A549 (cell line): ENCODE measurements at regions of chr1 and their contacts with region 1.

Region 1: DNA sequence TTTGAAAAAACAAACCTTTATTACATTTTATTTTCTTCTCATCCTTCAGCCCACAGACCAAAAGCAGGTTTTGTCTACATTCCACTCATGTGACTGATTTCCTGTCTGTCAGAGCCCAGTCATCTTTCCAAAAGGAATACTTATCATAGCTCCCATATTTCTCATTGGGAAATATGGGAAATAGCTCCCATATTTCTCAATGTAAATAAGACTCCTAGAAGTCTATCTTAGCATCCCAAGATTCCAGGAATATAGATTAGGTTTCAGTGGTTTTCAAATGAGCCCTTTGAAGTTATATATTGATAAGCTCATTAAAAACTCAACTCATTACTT is 19.1 kb upstream of the NRDC start:
- DNase-seq: peak; percentile 42 to 52
- ATAC-seq: peak; percentile 76 to 86
- H3K4me3 ChIP-seq: no peak overlapping the region
- H3K27ac ChIP-seq: peak overlapping the region; percentile 78 to 93
- H3K4me1 ChIP-seq: peaks cover 28% of the 10 kb centered on the region
- CTCF ChIP-seq: no peak
- EP300 ChIP-seq: peak; percentile 57 to 70; a peak in 1 of 5 replicates
- POLR2A ChIP-seq: no peak
- RAD21 ChIP-seq: no peak

Region 2: GRCh38 chr1:51863384-51863783 is 34.3 kb before region 1 on chr1:
- CTCF ChIA-PET with region 1: no interaction called
- POLR2A ChIA-PET with region 1: no interaction called
- DNase-seq: no peak
- ATAC-seq: no peak
- H3K4me3 ChIP-seq: no peak overlapping the region
- H3K27ac ChIP-seq: no peak overlapping the region
- H3K4me1 ChIP-seq: no peaks in the 10 kb centered on the region
- CTCF ChIP-seq: no peak
- EP300 ChIP-seq: no peak
- POLR2A ChIP-seq: no peak
- RAD21 ChIP-seq: no peak

Region 3: GRCh38 chr1:51926171-51926812 is 28.6 kb after region 1 on chr1:
- CTCF ChIA-PET with region 1: interaction called, 15 read pairs
- POLR2A ChIA-PET with region 1: interaction called, 3 read pairs
- DNase-seq: peak in 1 of 2 experiments; percentile 42
- ATAC-seq: peak; percentile 54 to 77; a peak in 4 of 6 replicates
- H3K4me3 ChIP-seq: no peak overlapping the region
- H3K27ac ChIP-seq: peak overlapping the region in 1 of 2 experiments; percentile 36; a peak in 1 of 6 replicates
- H3K4me1 ChIP-seq: no peaks in the 10 kb centered on the region; the same call in 2 of the 3 replicates
- CTCF ChIP-seq: peak; percentile 30; the same call in 2 of the 3 replicates
- EP300 ChIP-seq: no peak
- POLR2A ChIP-seq: no peak
- RAD21 ChIP-seq: peak in 1 of 2 experiments; percentile 63; a peak in 3 of 5 replicates

Region 4: GRCh38 chr1:51960262-51960661 is 62.6 kb after region 1 on chr1:
- CTCF ChIA-PET with region 1: no interaction called
- POLR2A ChIA-PET with region 1: no interaction called
- DNase-seq: no peak
- ATAC-seq: peak; percentile 48 to 54; a peak in 2 of 6 replicates
- H3K4me3 ChIP-seq: no peak overlapping the region
- H3K27ac ChIP-seq: no peak overlapping the region
- H3K4me1 ChIP-seq: peaks cover 16% of the 10 kb centered on the region
- CTCF ChIP-seq: no peak
- EP300 ChIP-seq: no peak
- POLR2A ChIP-seq: no peak
- RAD21 ChIP-seq: no peak

Region 5: DNA sequence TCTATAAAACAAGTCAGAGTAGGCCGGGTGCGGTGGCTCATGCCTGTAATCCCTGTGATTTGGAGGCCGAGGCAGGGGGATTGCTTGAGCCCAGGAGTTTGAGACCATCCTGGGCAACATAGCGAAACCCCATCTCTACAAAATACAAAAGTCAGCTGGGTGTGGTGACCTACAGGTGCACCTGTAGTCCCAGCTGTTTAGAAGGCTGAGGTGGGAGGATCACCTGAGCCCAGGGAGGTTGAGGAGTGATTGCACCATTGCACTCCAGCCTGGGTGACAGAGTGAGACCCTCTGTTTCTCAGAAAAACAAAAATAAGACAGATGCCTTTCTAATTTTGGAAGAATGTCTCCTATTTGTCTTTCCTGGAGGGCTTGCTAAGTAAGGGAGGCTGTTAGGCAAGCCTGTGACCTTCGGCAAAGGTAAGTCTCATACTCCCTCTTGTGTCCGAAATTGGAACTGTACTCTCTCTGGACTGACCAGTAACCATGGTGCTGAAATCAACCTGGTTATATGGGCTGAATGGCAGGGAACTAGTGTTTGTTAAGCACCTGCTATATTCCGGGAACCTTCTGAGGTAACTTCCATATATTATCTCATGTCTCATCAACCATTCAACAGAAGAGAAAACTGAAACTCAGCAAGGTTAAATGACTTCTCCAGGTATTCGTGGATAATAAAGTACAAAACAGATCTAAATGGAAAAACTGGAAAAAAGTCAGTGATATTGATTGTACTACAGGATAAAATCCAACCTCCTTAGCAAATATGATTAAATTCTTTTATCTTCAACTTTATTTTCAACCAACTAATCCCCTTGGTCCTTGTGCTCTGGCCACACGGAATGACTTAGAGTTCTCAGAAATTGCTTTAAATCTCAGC is 104.6 kb after region 1 on chr1:
- CTCF ChIA-PET with region 1: interaction called, 49 read pairs
- POLR2A ChIA-PET with region 1: no interaction called
- DNase-seq: peak; percentile 82 to 87
- ATAC-seq: peak; percentile 90 to 98
- H3K4me3 ChIP-seq: no peak overlapping the region
- H3K27ac ChIP-seq: peak overlapping the region in 1 of 2 experiments; percentile 75; a peak in 3 of 6 replicates
- H3K4me1 ChIP-seq: peaks cover 21% of the 10 kb centered on the region
- CTCF ChIP-seq: peak; percentile 79
- EP300 ChIP-seq: no peak
- POLR2A ChIP-seq: no peak
- RAD21 ChIP-seq: peak; percentile 91 to 95